ENCODE measurements at regions of chr3 and their contacts with region 1.

Region 1: GRCh38 chr3:97297032-97297431 is 467.5 kb upstream of the ARL6 start:
- DNase-seq: no peak
- H3K4me3 ChIP-seq: no peak overlapping the region
- H3K4me3 Mint-ChIP-seq: no peak overlapping the region
- H3K27ac Mint-ChIP-seq: no peak overlapping the region
- H3K4me1 ChIP-seq: no peaks in the 10 kb centered on the region
- H3K4me1 Mint-ChIP-seq: no peaks in the 10 kb centered on the region
- H3K27me3 ChIP-seq: no peaks in the 10 kb centered on the region
- H3K27me3 Mint-ChIP-seq: peaks cover 2% of the 10 kb centered on the region
- CTCF ChIP-seq: no peak

Region 2: GRCh38 chr3:96491023-96491422 is 806.0 kb before region 1 on chr3:
- CTCF ChIA-PET with region 1: no interaction called
- POLR2A ChIA-PET with region 1: no interaction called
- intact Hi-C with region 1: no loop called
- DNase-seq: no peak
- H3K4me3 ChIP-seq: no peak overlapping the region
- H3K4me3 Mint-ChIP-seq: no peak overlapping the region
- H3K27ac Mint-ChIP-seq: no peak overlapping the region
- H3K4me1 ChIP-seq: no peaks in the 10 kb centered on the region
- H3K4me1 Mint-ChIP-seq: no peaks in the 10 kb centered on the region
- H3K27me3 ChIP-seq: no peaks in the 10 kb centered on the region
- H3K27me3 Mint-ChIP-seq: no peaks in the 10 kb centered on the region
- CTCF ChIP-seq: no peak

Region 3: DNA sequence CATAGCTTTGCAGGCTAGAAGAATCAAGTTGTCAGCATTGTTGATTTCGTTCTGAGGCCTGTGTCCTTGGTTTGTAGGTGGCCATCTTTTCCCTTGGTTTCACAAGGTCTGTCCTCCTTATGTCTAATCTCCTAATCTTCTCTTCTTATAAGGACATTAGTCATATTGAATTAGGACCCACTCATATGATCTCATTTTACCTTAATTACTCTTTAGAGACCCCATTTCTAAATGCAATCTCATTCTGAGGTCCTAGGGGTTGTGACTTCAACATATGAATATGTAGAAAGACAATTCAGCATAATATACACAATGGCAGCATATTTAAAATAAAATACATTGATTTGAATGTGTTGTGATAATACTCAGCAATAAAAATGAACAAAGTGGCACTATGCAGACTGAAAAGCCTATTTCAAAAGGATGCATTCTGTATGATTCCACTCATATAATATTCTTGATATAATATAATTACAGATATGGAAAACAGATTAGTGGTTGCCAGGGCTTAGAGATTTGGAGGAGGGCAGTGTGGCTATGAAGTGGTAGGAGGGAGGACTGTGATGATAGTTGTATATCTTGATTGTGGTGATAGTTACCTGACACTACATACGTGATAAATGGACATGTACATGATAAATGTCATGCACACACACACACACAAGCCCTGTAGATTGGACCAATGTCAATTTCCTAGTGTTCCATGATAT is 51.7 kb before region 1 on chr3:
- CTCF ChIA-PET with region 1: no interaction called
- POLR2A ChIA-PET with region 1: no interaction called
- intact Hi-C with region 1: loop called (anchors 5 kb)
- DNase-seq: no peak
- H3K4me3 ChIP-seq: no peak overlapping the region
- H3K4me3 Mint-ChIP-seq: no peak overlapping the region
- H3K27ac Mint-ChIP-seq: no peak overlapping the region
- H3K4me1 ChIP-seq: no peaks in the 10 kb centered on the region
- H3K4me1 Mint-ChIP-seq: no peaks in the 10 kb centered on the region
- H3K27me3 ChIP-seq: no peaks in the 10 kb centered on the region
- H3K27me3 Mint-ChIP-seq: no peaks in the 10 kb centered on the region
- CTCF ChIP-seq: no peak

Measured in Caco-2 (cell line).